ENCODE measurements at regions of chr1 and their contacts with region 1.

Region 1: GRCh38 chr1:151399890-151400495 is 620 bp downstream of the PSMB4 start:
- DNase-seq: no peak
- ATAC-seq: peak; percentile 5

Region 2: DNA sequence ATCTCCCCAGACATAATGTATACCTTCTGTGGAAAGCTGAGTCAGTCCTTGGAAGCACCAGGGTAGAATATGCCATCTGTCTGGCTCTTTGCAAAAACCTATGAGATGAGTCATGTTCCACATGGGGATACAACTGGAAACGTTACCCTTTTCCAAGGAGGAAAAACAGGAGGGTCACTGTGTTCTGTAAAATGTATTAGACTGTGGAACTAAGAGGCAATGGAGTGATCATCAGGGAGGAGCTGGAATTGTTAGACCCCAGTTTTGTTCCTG is 161.6 kb before region 1 on chr1:
- intact Hi-C with region 1: no loop called
- DNase-seq: no peak
- ATAC-seq: no peak

Region 3: GRCh38 chr1:151281969-151282882 is 117.8 kb before region 1 on chr1 and contains the start of gene ZNF687:
- intact Hi-C with region 1: loop called (anchors 1 kb)
- DNase-seq: peak; percentile 100
- ATAC-seq: peak; percentile 95
- total RNA-seq, gene ZNF687: 10.8 TPM

Region 4: DNA sequence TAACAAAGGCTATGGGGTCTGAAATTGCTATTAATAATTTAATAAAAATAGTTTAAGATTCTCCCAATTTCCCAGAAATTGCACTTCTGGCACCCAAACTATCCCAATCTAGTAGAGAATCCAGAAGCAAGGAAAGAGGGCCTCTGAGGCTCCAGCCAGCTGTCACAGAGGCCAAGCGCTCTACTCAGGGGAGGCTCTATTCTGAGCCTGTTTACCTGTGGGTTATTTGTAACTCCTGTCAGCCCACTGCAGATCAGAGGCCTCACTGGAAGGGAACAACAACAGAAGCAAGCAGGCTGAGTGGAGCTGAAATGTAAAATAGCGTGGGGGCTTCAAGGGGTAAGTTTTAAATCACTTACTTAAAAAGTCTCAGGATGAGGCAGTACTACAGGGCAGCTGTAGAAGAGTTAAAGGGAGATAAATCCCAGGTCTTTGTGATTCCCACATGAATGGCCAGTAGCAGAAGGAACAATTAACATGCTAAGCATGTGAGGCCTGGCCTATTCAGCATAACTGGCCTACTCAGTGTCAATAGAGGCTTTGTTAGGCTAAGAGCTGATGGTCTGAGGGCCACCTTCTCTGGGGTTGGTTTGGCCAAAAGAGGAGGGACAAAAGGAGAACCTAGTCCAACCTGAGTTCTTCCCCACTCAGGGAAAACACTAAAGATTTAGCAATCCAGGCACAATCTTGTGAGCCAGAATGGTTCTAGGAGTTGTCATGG is 105.1 kb before region 1 on chr1:
- intact Hi-C with region 1: loop called (anchors 5 kb)
- DNase-seq: no peak
- ATAC-seq: no peak

Region 5: DNA sequence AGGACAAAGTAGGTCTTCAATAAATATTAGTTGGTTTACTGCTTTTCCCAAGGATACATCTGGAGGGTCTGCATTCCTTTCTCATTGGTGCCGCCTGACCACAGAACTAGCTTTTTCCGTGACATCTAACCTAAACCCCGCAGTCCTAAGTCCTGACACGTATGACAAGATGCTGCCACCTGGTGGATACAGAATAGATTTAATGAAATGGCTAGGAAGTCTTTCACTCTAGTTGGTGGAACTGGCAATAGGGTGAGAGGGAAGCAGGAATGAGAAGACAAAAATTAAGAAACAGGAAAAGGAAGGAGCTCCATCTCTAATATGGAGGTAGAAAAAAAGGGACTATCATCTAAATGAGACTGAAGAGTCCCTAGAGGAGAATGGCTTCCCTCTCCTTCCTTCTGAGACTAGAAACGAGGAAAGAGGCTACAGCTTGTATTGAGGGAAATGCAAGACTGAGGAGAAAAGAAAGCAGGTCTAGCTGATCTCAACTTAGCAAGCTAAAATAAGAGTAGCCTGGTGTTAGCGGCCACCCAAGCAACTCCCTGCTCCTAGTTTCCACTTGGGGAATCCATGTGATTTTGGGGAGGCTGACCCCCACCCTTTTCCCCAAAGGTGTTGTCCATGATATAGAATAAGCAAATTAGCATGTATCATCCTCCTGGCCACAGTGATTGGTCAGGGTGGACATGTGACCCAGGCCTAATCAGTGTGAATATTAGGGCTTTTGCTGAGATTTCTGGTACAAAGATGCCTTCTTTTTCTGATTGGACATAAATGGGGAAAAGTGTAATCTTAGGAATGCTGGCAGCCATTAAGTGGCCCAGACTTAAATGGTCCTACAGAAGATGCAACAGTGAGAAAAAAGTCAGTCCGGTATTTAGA is 58.9 kb before region 1 on chr1:
- intact Hi-C with region 1: loop called (anchors 2 kb)
- DNase-seq: no peak
- ATAC-seq: peak; percentile 82

Region 6: DNA sequence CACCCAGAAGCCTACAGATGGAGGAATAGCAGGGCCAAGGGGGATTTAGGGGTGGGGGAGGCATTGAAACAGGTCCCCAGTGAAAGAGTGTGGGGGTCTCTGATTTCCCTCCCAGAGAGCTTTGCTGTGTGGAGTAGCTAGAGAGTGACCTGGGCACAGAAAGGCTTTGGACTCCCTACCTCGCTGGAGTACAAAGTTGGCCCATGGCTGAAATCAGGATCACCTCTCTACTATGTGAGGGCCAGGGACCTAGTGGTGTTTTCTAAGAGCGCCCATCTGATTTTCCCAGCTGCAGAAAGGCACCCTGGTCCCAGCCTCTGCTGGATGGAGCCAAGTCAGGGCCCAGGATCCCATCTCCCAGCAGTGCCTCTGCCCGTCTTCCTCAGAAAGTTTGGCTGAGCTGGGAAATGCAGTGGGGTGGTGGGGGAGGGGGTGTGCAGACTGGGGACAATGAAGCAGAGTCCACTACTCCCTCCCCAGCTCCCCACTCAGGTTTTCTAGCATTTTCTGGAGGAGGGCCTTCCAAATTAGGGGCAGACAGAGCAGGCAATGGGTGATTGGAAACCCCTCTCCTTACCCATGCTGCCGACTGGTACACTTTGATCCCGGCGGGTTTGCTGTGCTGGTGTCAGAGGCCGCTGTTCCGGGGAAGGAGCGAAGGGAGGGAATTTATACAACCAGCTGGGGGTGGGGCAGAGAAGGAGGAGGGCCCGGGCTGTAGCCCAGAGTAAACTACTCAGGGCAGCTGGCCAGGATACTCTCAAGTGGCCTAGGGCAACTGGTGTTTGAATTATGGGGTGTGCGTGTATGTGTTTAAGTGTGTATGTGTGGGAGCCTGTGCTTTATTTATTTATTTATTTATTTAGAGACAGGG is 27.7 kb before region 1 on chr1 and contains the start of gene SELENBP1:
- intact Hi-C with region 1: loop called (anchors 1 kb)
- DNase-seq: peak; percentile 88
- ATAC-seq: peak; percentile 86
- total RNA-seq, gene SELENBP1: 129 TPM

Measured in Right ventricle myocardium inferior (tissue), 1 donor.